Natural killer cell (primary cell): ENCODE measurements at regions of chr3 and their contacts with region 1.

Region 1: GRCh38 chr3:128075516-128076482 is 23.6 kb downstream of the SEC61A1 start:
- DNase-seq: peak; percentile 89 to 94
- ATAC-seq: peak; percentile 91 to 96 (median 95)
- H3K4me3 ChIP-seq: peak overlapping the region; percentile 33
- H3K4me3 Mint-ChIP-seq: peak overlapping the region; percentile 83
- H3K27ac ChIP-seq: no peak overlapping the region
- H3K27ac Mint-ChIP-seq: peak overlapping the region in 1 of 2 donors; percentile 74
- H3K4me1 ChIP-seq: peaks cover 24% of the 10 kb centered on the region
- H3K4me1 Mint-ChIP-seq: peaks cover 0 to 13% of the 10 kb centered on the region in 2 donors
- H3K27me3 ChIP-seq: peaks cover 4% of the 10 kb centered on the region
- H3K27me3 Mint-ChIP-seq: no peaks in the 10 kb centered on the region
- CTCF ChIP-seq: peak; percentile 94

Region 2: DNA sequence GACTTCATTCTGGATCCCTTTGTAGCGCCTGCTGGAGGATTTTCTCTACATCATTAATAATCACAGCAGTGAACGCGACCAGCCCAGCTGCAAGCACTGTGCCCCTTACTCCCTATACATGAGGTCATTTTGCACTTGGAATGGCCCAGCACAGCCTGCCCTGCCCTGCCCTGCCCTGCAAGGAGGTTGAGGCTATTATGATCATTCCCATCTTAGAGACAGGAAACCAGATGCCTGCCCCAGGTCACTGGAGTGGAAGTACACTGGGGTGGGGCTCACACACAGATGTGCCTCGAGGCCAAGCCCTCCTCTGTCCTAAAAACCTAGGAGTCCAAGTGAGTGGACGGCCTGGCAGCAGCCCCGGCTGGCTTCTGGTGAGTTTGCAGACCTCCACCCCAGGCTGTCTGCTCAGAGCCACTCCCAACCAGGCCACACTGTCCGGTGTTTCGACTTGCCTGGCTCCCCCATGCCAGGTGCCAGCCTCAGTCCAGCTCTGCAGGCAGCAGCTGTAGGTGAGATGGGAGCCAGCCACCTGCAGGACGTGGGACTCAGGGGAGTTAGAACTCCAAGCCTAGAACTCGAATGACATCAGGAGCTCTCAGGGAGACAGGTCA is 53.9 kb before region 1 on chr3:
- intact Hi-C with region 1: no loop called
- DNase-seq: no peak
- ATAC-seq: no peak
- H3K4me3 ChIP-seq: no peak overlapping the region
- H3K4me3 Mint-ChIP-seq: no peak overlapping the region
- H3K27ac ChIP-seq: no peak overlapping the region
- H3K27ac Mint-ChIP-seq: no peak overlapping the region
- H3K4me1 ChIP-seq: no peaks in the 10 kb centered on the region
- H3K4me1 Mint-ChIP-seq: no peaks in the 10 kb centered on the region
- H3K27me3 ChIP-seq: no peaks in the 10 kb centered on the region
- H3K27me3 Mint-ChIP-seq: peaks cover 17 to 29% of the 10 kb centered on the region in 2 donors
- CTCF ChIP-seq: no peak

Region 3: GRCh38 chr3:128123538-128124368 is 48.0 kb after region 1 on chr3 and contains the start of gene RUVBL1:
- intact Hi-C with region 1: loop called (anchors 1 kb)
- DNase-seq: peak; percentile 92 to 98
- ATAC-seq: peak; percentile 96 to 98 (median 97)
- H3K4me3 ChIP-seq: peak within 1 kb of the TSS; percentile 84
- H3K4me3 Mint-ChIP-seq: peak within 1 kb of the TSS; percentile 99
- H3K27ac ChIP-seq: peak within 1 kb of the TSS; percentile 80
- H3K27ac Mint-ChIP-seq: peak within 1 kb of the TSS; percentile 95 to 96
- H3K4me1 ChIP-seq: peaks cover 17% of the 10 kb centered on the region
- H3K4me1 Mint-ChIP-seq: peaks cover 20 to 29% of the 10 kb centered on the region in 2 donors
- H3K27me3 ChIP-seq: no peaks in the 10 kb centered on the region
- H3K27me3 Mint-ChIP-seq: no peaks in the 10 kb centered on the region
- CTCF ChIP-seq: no peak
- total RNA-seq, gene RUVBL1: 11.9 to 18.5 (median 14.1) TPM

Region 4: GRCh38 chr3:128607710-128608048 is 531.9 kb after region 1 on chr3:
- intact Hi-C with region 1: loop called (anchors 5 kb)
- DNase-seq: no peak
- ATAC-seq: no peak
- H3K4me3 ChIP-seq: peak overlapping the region; percentile 37
- H3K4me3 Mint-ChIP-seq: peak overlapping the region; percentile 17
- H3K27ac ChIP-seq: no peak overlapping the region
- H3K27ac Mint-ChIP-seq: no peak overlapping the region
- H3K4me1 ChIP-seq: peaks cover 12% of the 10 kb centered on the region
- H3K4me1 Mint-ChIP-seq: no peaks in the 10 kb centered on the region
- H3K27me3 ChIP-seq: no peaks in the 10 kb centered on the region
- H3K27me3 Mint-ChIP-seq: no peaks in the 10 kb centered on the region
- CTCF ChIP-seq: no peak